ENCODE measurements at regions of chr7 and their contacts with region 1.

Region 1: GRCh38 chr7:44986218-44987053 is 7.6 kb upstream of the MYO1G start:
- DNase-seq: peak; percentile 92 to 97 (median 96)
- H3K4me3 ChIP-seq: peak overlapping the region; percentile 49
- H3K27ac ChIP-seq: peak overlapping the region; percentile 78 to 95
- H3K4me1 ChIP-seq: no peaks in the 10 kb centered on the region
- H3K27me3 ChIP-seq: no peaks in the 10 kb centered on the region
- CTCF ChIP-seq: peak in 2 of 3 donors; percentile 5 to 25
- EP300 ChIP-seq: no peak
- POLR2A ChIP-seq: peak; percentile 99

Region 2: GRCh38 chr7:44606450-44607254 is 379.8 kb before region 1 on chr7 and contains the start of gene OGDH:
- intact Hi-C with region 1: loop called in 1 of 4 experiments (anchors 10 kb)
- DNase-seq: peak; percentile 99
- H3K4me3 ChIP-seq: peak within 1 kb of the TSS; percentile 87
- H3K27ac ChIP-seq: peak within 1 kb of the TSS; percentile 95 to 98
- H3K4me1 ChIP-seq: peaks cover 2% of the 10 kb centered on the region
- H3K27me3 ChIP-seq: no peaks in the 10 kb centered on the region
- CTCF ChIP-seq: peak in 1 of 3 donors; percentile 49
- EP300 ChIP-seq: peak; percentile 83
- POLR2A ChIP-seq: peak; percentile 97
- total RNA-seq, gene OGDH: 25.9 to 84.6 (median 59.3) TPM

Region 3: GRCh38 chr7:44885394-44886317 is 100.8 kb before region 1 on chr7 and contains the start of gene PURB:
- intact Hi-C with region 1: loop called in 1 of 4 experiments (anchors 10 kb)
- DNase-seq: peak; percentile 93 to 96 (median 95)
- H3K4me3 ChIP-seq: peak within 1 kb of the TSS; percentile 89
- H3K27ac ChIP-seq: peak within 1 kb of the TSS; percentile 74 to 97
- H3K4me1 ChIP-seq: peaks cover 14% of the 10 kb centered on the region
- H3K27me3 ChIP-seq: no peaks in the 10 kb centered on the region
- CTCF ChIP-seq: peak in 1 of 3 donors; percentile 36
- EP300 ChIP-seq: peak; percentile 8
- POLR2A ChIP-seq: peak; percentile 97
- total RNA-seq, gene PURB: 17.6 to 27.3 (median 25.6) TPM

Region 4: GRCh38 chr7:45111298-45112223 is 125.1 kb after region 1 on chr7 and contains the start of gene TBRG4:
- intact Hi-C with region 1: loop called in 1 of 4 experiments (anchors 10 kb)
- DNase-seq: peak; percentile 90 to 96 (median 92)
- H3K4me3 ChIP-seq: peak within 1 kb of the TSS; percentile 83
- H3K27ac ChIP-seq: peak within 1 kb of the TSS; percentile 63 to 90
- H3K4me1 ChIP-seq: peaks cover 6% of the 10 kb centered on the region
- H3K27me3 ChIP-seq: no peaks in the 10 kb centered on the region
- CTCF ChIP-seq: peak in 1 of 3 donors; percentile 39
- EP300 ChIP-seq: no peak
- POLR2A ChIP-seq: peak; percentile 98
- total RNA-seq, gene TBRG4: 28.9 to 67.5 (median 50.8) TPM

Measured in ovary (tissue), 10 donors.